H1 (cell line): ENCODE measurements at regions of chr7 and their contacts with region 1.

Region 1: DNA sequence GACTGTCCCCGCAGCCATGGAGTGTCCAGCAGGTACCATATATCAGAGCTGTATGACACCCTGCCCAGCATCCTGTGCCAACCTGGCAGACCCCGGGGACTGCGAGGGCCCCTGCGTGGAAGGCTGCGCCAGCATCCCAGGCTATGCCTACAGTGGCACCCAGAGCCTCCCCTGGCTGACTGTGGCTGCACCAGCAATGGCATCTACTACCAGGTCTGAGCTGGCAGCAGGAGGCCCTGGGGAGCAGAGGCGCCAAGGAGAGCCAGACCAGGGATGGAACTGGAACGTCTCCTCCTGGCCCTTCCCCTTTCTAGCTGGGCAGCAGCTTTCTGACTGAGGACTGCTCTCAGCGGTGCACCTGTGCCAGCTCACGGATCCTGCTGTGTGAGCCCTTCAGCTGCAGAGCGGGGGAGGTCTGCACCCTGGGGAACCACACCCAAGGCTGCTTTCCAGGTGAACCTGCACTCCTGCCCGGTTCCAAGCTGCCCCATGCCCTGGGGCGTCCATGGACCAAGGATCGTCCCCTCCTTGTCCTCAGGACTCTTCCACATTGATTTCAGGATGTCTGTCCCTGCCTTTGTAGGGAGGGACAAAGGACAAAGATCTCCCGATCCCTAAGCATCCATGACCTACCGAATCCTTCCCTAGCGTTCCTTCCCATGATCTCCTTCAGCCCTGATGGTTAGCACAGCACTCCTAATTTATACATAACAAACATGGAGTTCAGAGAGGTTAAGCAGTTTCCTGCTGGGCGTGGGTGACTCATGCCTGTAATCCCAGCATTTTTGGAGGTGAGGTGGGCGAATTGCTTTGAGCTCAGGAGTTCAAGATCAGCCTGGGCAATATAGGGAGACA is 33.3 kb downstream of the EPHB4 start:
- DNase-seq: no peak
- H3K4me3 ChIP-seq: no peak overlapping the region
- H3K27ac ChIP-seq: no peak overlapping the region
- H3K4me1 ChIP-seq: peaks cover 0 to 11% (median 6%) of the 10 kb centered on the region in 4 experiments; a peak in 6 of 7 replicates
- H3K27me3 ChIP-seq: no peaks in the 10 kb centered on the region
- CTCF ChIP-seq: no peak
- EP300 ChIP-seq: no peak
- POLR2A ChIP-seq: no peak
- RAD21 ChIP-seq: no peak

Region 2: GRCh38 chr7:100726996-100727761 is 66.9 kb before region 1 on chr7:
- CTCF ChIA-PET with region 1: interaction called, 30 read pairs
- POLR2A ChIA-PET with region 1: interaction called, 4 read pairs
- DNase-seq: no peak
- H3K4me3 ChIP-seq: no peak overlapping the region
- H3K27ac ChIP-seq: no peak overlapping the region
- H3K4me1 ChIP-seq: no peaks in the 10 kb centered on the region
- H3K27me3 ChIP-seq: no peaks in the 10 kb centered on the region; a peak in 3 of 7 replicates
- CTCF ChIP-seq: no peak
- EP300 ChIP-seq: no peak
- POLR2A ChIP-seq: no peak
- RAD21 ChIP-seq: no peak

Region 3: GRCh38 chr7:100763556-100764140 is 30.4 kb before region 1 on chr7:
- CTCF ChIA-PET with region 1: interaction called, 10 read pairs
- POLR2A ChIA-PET with region 1: interaction called, 12 read pairs
- DNase-seq: no peak
- H3K4me3 ChIP-seq: no peak overlapping the region
- H3K27ac ChIP-seq: no peak overlapping the region
- H3K4me1 ChIP-seq: peaks cover 0 to 2% (median 0%) of the 10 kb centered on the region in 4 experiments; a peak in 3 of 7 replicates
- H3K27me3 ChIP-seq: no peaks in the 10 kb centered on the region; a peak in 1 of 7 replicates
- CTCF ChIP-seq: no peak
- EP300 ChIP-seq: no peak
- POLR2A ChIP-seq: no peak
- RAD21 ChIP-seq: no peak

Region 4: GRCh38 chr7:100778061-100778621 is 15.9 kb before region 1 on chr7:
- CTCF ChIA-PET with region 1: interaction called, 28 read pairs
- POLR2A ChIA-PET with region 1: interaction called, 5 read pairs
- DNase-seq: no peak
- H3K4me3 ChIP-seq: no peak overlapping the region
- H3K27ac ChIP-seq: no peak overlapping the region
- H3K4me1 ChIP-seq: no peaks in the 10 kb centered on the region; a peak in 1 of 7 replicates
- H3K27me3 ChIP-seq: no peaks in the 10 kb centered on the region
- CTCF ChIP-seq: no peak
- EP300 ChIP-seq: no peak
- POLR2A ChIP-seq: no peak
- RAD21 ChIP-seq: no peak

Region 5: DNA sequence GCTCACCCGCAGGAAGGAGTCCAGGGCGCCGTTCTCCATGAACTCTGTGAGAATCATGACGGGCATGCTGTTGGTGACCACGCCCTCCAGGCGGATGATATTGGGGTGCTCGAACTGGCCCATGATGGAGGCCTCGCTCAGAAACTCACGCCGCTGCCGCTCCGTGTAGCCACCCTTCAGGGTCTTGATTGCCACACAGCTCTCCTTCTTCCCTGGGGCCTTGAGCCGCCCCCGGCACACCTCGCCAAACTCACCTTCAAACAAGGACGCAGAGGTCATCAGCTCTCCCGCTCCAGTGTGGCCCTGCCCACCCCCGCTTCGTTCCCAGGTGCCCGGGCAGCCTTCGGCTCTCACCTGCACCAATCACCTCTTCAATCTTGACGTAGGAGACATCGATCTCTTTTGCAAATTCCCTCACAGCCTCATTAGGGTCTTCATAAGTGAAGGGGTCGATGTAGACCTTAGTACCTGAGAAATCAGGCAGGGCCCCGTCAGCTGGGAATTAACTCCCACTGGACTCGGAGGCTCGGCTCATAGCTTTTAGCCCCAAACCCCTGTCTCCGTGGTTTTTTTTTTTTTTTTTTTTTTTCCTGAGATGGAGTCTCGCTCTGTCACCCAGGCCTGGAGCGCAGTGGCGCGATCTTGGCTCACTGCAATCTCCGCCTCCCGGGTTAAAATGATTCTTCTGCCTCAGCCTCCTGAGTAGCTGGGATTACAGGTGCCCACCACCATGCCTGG is 18.9 kb after region 1 on chr7:
- CTCF ChIA-PET with region 1: interaction called, 117 read pairs
- POLR2A ChIA-PET with region 1: interaction called, 124 read pairs
- DNase-seq: no peak
- H3K4me3 ChIP-seq: no peak overlapping the region
- H3K27ac ChIP-seq: no peak overlapping the region; the same call in 1 of the 2 replicates
- H3K4me1 ChIP-seq: no peaks in the 10 kb centered on the region
- H3K27me3 ChIP-seq: no peaks in the 10 kb centered on the region
- CTCF ChIP-seq: no peak
- EP300 ChIP-seq: no peak
- POLR2A ChIP-seq: no peak
- RAD21 ChIP-seq: no peak

Region 6: GRCh38 chr7:100827330-100828227 is 33.5 kb after region 1 on chr7 and contains the start of gene EPHB4:
- CTCF ChIA-PET with region 1: interaction called, 42 read pairs
- POLR2A ChIA-PET with region 1: interaction called, 76 read pairs
- DNase-seq: peak in 1 of 2 experiments; percentile 93
- H3K4me3 ChIP-seq: peak within 1 kb of the TSS; percentile 88 to 100 (median 92)
- H3K27ac ChIP-seq: peak within 1 kb of the TSS; percentile 81
- H3K4me1 ChIP-seq: peaks cover 0 to 13% (median 10%) of the 10 kb centered on the region in 4 experiments; a peak in 6 of 7 replicates
- H3K27me3 ChIP-seq: no peaks in the 10 kb centered on the region
- CTCF ChIP-seq: peak; percentile 55 to 63 (median 61)
- EP300 ChIP-seq: no peak
- POLR2A ChIP-seq: peak in 1 of 2 experiments; percentile 30; a peak in 1 of 3 replicates
- RAD21 ChIP-seq: peak; percentile 30 to 60; a peak in 3 of 4 replicates
- total RNA-seq, gene EPHB4: 113 and 122 TPM in 2 replicates

Region 7: DNA sequence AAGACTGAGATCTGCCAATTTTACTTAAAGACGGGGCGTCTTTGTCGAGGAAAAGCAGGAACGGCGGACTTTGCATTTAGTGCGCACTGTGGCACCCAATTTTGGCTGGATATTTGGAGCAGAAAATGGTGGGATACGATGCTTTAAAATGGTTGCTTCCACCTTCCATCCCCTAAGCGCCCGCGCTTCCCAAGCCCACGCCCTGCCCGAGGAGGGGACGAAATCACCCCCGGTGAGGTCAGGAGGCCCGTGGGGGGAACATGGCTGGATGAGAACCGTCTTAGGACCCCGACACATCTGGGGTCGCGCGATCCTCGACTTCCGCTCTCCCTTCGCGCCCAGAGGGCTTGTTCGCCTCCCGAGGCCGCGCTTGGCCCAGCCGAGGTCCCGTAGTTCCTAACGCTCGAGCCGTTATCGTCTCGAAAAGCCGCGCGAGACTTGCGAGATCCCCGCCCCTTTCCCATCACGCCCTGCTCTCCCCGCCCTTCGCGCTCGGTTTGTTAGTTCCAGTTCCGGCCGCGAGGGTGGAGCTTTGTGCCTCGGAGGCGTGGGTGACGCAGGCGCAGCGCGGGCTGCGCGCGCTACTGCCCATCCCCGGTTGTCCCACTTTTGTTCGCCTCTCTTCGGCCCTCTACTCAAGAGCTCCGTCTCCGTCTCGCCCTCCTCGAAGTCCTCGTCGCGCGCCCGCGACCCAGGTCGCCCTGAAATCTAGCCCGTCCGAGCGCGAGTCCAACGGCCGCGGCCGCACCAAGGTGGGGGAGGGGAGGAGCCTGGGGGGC is 80.7 kb after region 1 on chr7 and contains the start of gene SRRT:
- CTCF ChIA-PET with region 1: no interaction called
- POLR2A ChIA-PET with region 1: interaction called, 11 read pairs
- DNase-seq: peak; percentile 95 to 97
- H3K4me3 ChIP-seq: peak within 1 kb of the TSS; percentile 81 to 93 (median 91)
- H3K27ac ChIP-seq: peak within 1 kb of the TSS; percentile 93
- H3K4me1 ChIP-seq: peaks cover 0 to 9% (median 1%) of the 10 kb centered on the region in 4 experiments; a peak in 3 of 7 replicates
- H3K27me3 ChIP-seq: no peaks in the 10 kb centered on the region
- CTCF ChIP-seq: peak in 1 of 3 experiments; percentile 19; a peak in 1 of 4 replicates
- EP300 ChIP-seq: no peak; a peak in 1 of 3 replicates
- POLR2A ChIP-seq: peak in 1 of 2 experiments; percentile 98; a peak in 2 of 3 replicates
- RAD21 ChIP-seq: no peak
- total RNA-seq, gene SRRT: 237 and 239 TPM in 2 replicates

Region 8: DNA sequence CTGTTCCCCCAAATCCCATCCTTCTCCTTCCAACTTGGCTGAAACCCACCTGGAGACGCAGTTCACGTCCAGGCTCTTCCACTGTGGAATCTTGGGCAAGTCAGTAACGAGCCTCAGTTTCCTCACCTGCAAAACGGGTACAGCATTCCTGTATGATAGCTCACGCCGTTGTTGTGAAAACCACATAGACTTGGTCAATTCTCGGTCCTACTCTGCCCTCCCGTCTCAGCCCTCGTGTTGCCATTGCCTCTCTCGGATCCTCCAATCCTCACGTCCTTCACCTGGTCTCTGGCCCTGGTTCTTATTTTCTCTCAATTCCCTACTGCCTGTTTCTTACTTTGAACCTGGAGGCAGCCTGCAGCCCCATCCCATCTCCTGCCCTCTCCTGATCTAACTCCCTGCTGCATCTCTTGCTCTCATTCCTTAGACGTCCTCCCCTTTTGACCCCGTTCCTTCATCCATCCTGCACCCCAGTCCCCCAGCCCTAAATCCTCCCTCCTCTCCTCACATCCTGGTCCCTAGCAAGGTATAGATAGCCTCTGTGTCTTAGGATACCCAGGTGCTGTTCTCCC is 173.3 kb after region 1 on chr7:
- CTCF ChIA-PET with region 1: no interaction called
- POLR2A ChIA-PET with region 1: no interaction called
- DNase-seq: no peak
- H3K4me3 ChIP-seq: peak overlapping the region in 1 of 4 experiments; percentile 64; a peak in 2 of 8 replicates
- H3K27ac ChIP-seq: no peak overlapping the region
- H3K4me1 ChIP-seq: peaks cover 4 to 32% (median 26%) of the 10 kb centered on the region in 4 experiments
- H3K27me3 ChIP-seq: peaks cover 3 to 18% (median 14%) of the 10 kb centered on the region in 4 experiments
- CTCF ChIP-seq: peak in 1 of 3 experiments; percentile 2; a peak in 1 of 4 replicates
- EP300 ChIP-seq: no peak
- POLR2A ChIP-seq: no peak
- RAD21 ChIP-seq: no peak